ENCODE measurements at regions of chr19 and their contacts with region 1.

Region 1: GRCh38 chr19:639253-640160 is at the start of gene FGF22:
- DNase-seq: peak; percentile 97
- H3K4me3 Mint-ChIP-seq: peak within 1 kb of the TSS; percentile 90
- H3K27ac Mint-ChIP-seq: peak within 1 kb of the TSS; percentile 82
- H3K4me1 Mint-ChIP-seq: peaks cover 6% of the 10 kb centered on the region
- H3K27me3 Mint-ChIP-seq: peaks cover 3% of the 10 kb centered on the region
- total RNA-seq, gene FGF22: not detected in 2 replicates

Region 2: DNA sequence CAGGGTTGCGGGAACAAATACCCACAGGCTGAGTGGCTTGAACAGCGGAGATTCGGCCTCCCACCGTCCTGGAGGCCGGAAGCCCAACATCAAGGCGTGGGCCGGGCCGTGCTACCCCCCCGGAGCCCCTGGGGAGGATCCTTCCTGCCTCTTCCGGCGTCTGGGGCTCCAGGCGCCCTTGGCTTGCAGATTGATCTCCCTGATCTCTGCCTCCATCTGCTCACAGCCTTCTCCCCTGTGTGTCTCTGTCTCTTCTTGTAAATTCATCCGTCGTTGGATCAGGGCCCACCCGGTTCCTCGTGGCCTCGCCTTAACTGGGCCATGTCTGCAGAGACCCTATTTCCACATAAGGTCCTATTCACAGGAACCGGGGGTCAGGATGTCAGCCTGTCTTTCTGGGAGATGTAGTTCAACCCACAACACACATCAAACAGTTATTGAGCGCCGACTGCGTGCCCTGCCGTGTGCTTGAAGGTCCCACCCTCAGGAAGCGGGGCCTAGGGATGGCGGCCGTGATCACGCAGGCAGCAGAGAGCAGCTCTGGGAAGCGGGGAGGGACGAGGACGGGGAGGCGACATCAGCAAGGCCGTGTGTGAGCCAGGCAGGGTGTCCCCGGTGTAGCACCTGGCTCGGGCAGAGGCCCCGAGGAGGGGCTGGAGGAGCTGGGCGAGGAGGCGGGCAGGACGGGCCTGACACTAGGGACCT is 28.6 kb before region 1 on chr19:
- intact Hi-C with region 1: loop called (anchors 1 kb)
- DNase-seq: peak; percentile 89
- H3K4me3 Mint-ChIP-seq: peak overlapping the region; percentile 86
- H3K27ac Mint-ChIP-seq: peak overlapping the region; percentile 95
- H3K4me1 Mint-ChIP-seq: peaks cover 12% of the 10 kb centered on the region
- H3K27me3 Mint-ChIP-seq: peaks cover 2% of the 10 kb centered on the region

Measured in activated CD4-positive, alpha-beta T cell treated with anti-CD3 and anti-CD28 coated beads, Interleukin-2, amount 10 ng/mL, durations not matched to agents 24 days and 14 days (primary cell).